Prostate gland (tissue), 2 donors: ENCODE measurements at regions of chr12 and their contacts with region 1.

Region 1: DNA sequence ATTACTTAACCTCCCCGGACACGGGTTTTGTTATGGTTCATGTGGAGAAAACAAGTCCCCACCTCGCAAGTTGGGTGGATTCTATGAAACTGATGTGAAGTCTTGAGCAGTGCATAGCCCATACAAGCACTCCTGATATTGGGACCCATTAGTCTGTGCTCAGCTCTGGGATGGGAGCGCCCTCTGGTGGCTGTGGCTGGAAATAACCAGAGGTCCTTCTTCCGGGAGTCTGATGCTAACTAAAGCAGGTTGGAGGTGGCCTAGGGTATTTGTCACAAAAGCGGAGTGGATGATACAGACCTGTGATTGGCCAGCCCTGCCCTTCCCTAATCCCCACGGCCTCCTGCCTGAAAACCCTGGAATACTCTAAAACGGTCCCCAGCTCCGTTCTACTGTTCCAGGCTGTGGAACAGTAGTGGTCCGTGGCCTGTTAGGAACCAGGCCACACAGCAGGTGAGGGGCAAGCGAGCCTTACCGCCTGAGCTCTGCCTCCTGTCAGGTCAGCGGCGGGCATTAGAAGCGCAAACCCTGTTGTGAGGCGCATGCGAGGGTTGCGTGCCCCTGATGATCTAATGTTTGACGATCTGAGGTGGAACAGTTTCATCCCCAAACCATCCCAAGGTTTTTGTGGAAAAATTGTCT is 6.4 kb downstream of the SLC48A1 start:
- DNase-seq: peak; percentile 84
- H3K4me3 ChIP-seq: no peak overlapping the region
- H3K27ac ChIP-seq: no peak overlapping the region
- H3K4me1 ChIP-seq: peaks cover 12% of the 10 kb centered on the region
- H3K27me3 ChIP-seq: no peaks in the 10 kb centered on the region
- CTCF ChIP-seq: peak; percentile 79 to 96 (median 95)
- POLR2A ChIP-seq: no peak

Region 2: DNA sequence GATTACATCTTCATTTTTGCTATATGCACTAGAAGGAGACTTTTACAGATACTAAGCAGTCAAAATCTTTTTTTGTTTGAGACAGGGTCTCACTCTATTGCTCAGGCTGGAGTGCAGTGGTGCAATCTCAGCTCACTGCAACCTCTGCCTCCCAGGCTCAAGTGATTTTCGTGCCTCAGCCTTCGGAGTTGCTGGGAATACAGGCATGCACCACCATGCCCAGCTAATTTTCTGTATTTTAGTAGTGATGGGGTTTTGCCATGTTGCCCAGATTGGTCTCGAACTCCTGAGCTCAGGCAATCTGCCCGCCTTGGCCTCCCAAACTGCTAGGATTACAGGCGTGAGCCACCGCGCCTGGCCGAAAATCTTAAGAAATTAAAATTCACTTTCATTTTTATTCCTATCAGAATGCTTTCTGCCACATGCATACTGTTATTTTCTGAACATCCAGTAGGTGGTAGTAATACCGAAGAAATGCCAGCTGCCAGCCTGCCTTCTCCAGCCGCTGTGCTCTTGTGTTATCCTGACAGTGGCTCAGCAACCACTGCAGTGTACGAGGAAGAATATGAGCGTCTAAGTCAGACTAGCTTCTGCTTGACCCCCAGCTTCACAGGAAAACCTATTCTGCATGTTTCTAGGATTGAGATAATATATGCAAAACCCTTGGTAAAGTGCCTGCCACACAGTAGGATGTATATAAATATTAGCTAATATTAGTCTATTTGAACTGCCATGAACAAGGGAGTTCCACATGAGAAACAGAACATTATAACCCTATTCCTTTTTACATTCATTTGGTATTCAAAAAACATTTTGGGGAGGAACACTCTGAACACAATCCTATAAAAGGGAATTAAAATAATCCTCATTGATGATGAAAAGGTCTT is 127.8 kb before region 1 on chr12:
- intact Hi-C with region 1: loop called (anchors 5 kb)
- DNase-seq: peak; percentile 43
- H3K4me3 ChIP-seq: no peak overlapping the region
- H3K27ac ChIP-seq: no peak overlapping the region
- H3K4me1 ChIP-seq: peaks cover 2% of the 10 kb centered on the region
- H3K27me3 ChIP-seq: no peaks in the 10 kb centered on the region
- CTCF ChIP-seq: peak; percentile 36 to 75 (median 62)
- POLR2A ChIP-seq: no peak

Region 3: GRCh38 chr12:47686645-47687240 is 92.7 kb before region 1 on chr12:
- intact Hi-C with region 1: no loop called
- DNase-seq: no peak
- H3K4me3 ChIP-seq: no peak overlapping the region
- H3K27ac ChIP-seq: no peak overlapping the region
- H3K4me1 ChIP-seq: no peaks in the 10 kb centered on the region
- H3K27me3 ChIP-seq: no peaks in the 10 kb centered on the region
- CTCF ChIP-seq: peak in 3 of 4 experiments; percentile 33 to 71 (median 58)
- POLR2A ChIP-seq: no peak

Region 4: DNA sequence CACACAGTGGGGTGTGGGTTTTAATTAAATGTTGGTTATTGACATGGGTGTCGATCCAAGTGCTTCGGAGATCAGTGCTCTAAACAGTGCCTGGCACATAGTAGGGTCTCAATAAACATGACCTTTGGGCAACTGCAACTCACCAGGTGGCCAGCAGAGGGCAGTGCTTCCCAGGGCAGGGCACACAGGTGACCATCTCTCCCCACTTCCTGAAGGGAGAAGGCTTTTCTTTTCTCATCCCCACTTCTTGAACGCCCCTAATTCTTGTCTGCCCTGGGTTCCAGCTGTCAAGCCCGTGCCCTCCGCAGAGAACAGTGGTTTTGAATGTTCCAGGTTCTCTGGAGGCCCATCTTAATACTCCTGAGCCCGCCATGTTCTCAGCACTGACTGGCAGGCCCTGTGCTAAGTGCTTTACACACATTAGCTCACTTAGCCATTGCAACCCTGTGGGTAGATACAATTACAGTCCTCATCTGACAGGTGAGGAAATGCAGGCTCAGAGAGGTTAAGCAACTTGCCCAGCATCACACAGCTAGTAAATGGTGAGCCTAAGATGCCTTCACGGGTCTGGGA is 37.1 kb before region 1 on chr12:
- intact Hi-C with region 1: loop called (anchors 5 kb)
- DNase-seq: no peak
- H3K4me3 ChIP-seq: no peak overlapping the region
- H3K27ac ChIP-seq: no peak overlapping the region
- H3K4me1 ChIP-seq: no peaks in the 10 kb centered on the region
- H3K27me3 ChIP-seq: no peaks in the 10 kb centered on the region
- CTCF ChIP-seq: peak; percentile 94 to 99 (median 94)
- POLR2A ChIP-seq: no peak